Sciatic nerve (tissue), 2 donors: ENCODE measurements at regions of chr12 and their contacts with region 1.

Region 1: GRCh38 chr12:5872735-5873134 is 72.3 kb downstream of the ANO2 start:
- DNase-seq: no peak
- ATAC-seq: peak; percentile 26

Region 2: GRCh38 chr12:5745265-5745888 is 127.4 kb before region 1 on chr12:
- intact Hi-C with region 1: loop called (anchors 10 kb)
- DNase-seq: peak; percentile 79
- ATAC-seq: peak; percentile 89